Activated CD4-positive, alpha-beta memory T cell treated with anti-CD3 and anti-CD28 coated beads, Interleukin-2, amount 10 ng/mL, durations not matched to agents 7 days and 5 days (primary cell): ENCODE measurements at regions of chr19 and their contacts with region 1.

Region 1: DNA sequence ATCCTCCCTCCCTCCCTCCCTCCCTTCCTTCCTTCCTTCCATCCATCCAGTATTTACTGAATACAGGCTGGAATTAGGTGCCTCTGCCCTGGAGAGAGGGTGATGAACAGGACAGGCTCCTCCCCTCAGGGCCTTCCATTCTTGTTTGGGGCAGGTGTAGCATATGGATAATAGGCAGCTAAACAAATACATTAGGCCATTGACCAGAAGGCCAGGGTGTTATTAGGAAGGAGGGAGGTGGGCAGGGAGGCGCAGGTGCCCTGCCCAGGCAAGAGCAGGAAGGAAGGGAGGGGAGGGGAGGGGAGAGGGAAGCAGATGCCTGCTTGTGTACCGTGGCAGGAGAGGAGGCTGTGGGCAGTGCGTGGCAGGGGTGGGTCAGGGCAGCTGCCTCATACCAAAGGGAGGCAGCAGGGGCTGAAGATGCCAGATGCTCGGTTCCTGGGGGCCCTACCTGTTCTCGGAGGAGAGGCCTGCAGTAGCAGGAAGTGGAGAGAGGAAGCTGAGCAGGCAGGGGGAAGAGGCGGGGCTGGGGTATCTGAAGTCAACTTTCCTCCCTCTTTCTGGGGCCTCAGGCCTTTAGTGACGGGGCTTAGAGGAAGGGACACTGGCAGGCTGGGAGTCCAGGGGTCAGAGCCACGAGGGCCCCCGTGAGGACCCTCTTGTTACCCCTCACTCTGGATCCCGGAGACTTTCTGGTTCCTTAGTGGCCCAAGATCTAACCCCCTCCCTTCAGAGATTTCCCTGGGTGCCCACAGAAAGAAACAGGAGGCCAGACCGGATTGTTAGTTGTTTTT is at the start of gene RINL:
- DNase-seq: peak; percentile 78
- H3K4me3 Mint-ChIP-seq: peak within 1 kb of the TSS; percentile 87
- H3K27ac Mint-ChIP-seq: peak within 1 kb of the TSS; percentile 98
- H3K4me1 Mint-ChIP-seq: peaks cover 43% of the 10 kb centered on the region
- H3K27me3 Mint-ChIP-seq: no peaks in the 10 kb centered on the region
- total RNA-seq, gene RINL: 79.9 to 82.2 TPM

Region 2: DNA sequence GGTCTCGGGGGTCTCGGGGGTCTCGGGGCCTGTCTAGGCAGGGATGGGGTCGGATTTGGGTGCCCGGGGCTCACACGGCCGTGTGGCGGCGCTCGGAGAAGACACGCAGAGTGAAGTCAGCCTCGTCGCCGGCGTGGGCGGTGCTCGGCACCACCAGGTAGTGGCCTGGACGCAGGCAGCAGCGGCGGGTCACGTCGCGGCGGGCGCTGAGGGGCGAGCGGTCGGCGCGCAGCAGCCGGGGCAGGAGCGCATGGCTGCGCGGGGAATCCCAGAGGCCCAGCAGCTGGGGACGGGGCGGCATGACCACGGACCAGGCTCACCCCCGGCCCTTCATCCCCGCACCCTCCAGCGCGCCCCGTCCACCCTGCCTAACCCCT is 142.0 kb before region 1 on chr19:
- CTCF ChIA-PET with region 1: no interaction called
- POLR2A ChIA-PET with region 1: interaction called, 15 read pairs
- DNase-seq: peak; percentile 65
- H3K4me3 Mint-ChIP-seq: peak overlapping the region; percentile 63
- H3K27ac Mint-ChIP-seq: no peak overlapping the region
- H3K4me1 Mint-ChIP-seq: peaks cover 62% of the 10 kb centered on the region
- H3K27me3 Mint-ChIP-seq: peaks cover 4% of the 10 kb centered on the region

Region 3: DNA sequence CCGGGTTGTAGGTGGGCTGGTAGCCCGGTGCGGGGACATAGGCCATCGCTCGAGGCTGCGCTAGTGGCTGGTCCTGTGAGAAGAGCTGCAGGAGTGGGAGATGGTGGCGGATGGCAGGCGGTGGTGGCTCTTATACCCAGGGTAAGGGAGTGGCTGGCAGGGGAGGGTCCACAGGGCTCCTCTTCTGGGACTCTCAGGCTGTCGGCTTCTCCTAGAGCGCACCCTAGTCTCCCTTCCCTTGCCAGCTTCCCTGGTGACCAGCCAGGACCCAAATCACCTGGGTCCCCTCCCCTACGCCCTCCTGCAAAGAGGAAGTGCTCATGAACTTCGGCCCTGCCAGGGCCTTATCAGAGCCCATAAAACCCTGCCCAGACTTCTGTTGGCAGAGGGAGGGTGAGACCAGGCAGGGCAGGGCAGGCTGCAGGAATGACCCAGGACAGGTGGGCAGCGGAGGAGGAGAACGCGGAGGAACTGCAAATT is 65.1 kb before region 1 on chr19 and contains the start of gene LGALS4:
- CTCF ChIA-PET with region 1: no interaction called
- POLR2A ChIA-PET with region 1: no interaction called
- DNase-seq: no peak
- H3K4me3 Mint-ChIP-seq: no peak within 1 kb of the TSS
- H3K27ac Mint-ChIP-seq: no peak within 1 kb of the TSS
- H3K4me1 Mint-ChIP-seq: no peaks in the 10 kb centered on the region
- H3K27me3 Mint-ChIP-seq: no peaks in the 10 kb centered on the region
- total RNA-seq, gene LGALS4: 0.81 to 0.93 TPM

Region 4: DNA sequence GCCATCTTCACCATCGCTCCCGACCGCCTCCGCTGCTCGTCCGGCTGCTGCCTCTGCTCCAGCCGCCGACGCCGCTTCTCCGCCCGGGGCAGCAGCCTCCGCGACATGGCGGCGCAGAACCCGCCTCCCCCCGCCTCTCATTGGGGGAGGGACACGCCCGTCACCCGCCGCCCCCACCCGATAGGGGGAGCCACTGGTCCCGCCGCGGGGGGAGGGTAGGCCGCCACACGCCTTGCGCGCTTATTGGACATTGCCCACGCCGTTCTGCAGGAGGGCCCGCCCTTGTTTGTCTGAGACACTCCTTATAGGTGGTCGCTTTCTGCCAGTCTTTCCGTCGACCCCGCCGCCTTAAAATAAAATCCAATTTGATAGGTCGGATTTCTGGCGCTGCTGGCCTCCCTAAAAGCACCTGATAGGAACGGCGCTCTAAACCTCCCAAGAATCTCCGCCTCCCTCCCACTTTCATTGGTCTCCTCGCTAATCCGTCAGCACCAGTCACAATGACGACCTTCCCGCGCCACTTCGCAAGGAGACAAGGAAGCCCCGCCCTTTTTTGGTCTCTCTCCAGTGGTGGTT is 28.0 kb before region 1 on chr19 and contains the start of gene HNRNPL:
- CTCF ChIA-PET with region 1: interaction called, 6 read pairs
- POLR2A ChIA-PET with region 1: interaction called, 46 read pairs
- DNase-seq: peak; percentile 99
- H3K4me3 Mint-ChIP-seq: peak within 1 kb of the TSS; percentile 92
- H3K27ac Mint-ChIP-seq: peak within 1 kb of the TSS; percentile 99
- H3K4me1 Mint-ChIP-seq: peaks cover 58% of the 10 kb centered on the region
- H3K27me3 Mint-ChIP-seq: no peaks in the 10 kb centered on the region
- total RNA-seq, gene HNRNPL: 457 to 464 TPM

Region 5: DNA sequence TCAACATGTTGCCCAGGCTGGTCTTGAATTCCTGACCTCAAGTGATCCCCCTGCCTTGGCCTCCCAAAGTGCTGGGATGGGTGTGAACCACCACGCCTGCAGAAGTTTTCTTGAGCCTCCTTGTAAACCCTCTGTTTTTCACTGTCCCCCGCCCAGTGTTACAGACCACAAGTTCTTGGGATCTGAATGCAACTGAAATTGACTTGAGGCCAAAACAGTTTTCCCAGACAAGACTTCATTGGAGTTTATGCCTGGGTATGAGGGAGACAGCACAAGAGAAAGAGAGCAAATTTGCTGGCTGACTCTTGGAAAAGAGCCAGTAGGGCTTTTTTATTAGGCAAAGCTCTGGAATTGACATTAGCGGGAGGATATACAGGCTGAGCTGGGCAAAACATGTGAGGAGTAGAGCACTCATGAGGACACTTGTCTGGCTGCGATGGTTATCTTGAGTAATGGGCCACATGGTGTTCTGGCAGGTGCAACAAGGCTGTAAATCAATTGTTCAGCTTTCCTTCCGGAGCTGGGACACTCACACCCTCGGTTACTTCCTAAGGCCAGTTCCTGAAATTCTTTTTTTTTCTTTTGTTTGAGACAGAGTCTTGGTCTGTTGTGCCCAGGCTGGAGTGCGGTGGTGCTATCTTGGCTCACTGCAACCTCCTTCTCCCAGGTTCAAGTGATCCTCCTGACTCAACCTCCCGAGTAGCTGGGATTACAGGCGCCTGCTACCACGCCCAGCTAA is 15.5 kb before region 1 on chr19:
- CTCF ChIA-PET with region 1: interaction called, 6 read pairs
- POLR2A ChIA-PET with region 1: interaction called, 38 read pairs
- DNase-seq: no peak
- H3K4me3 Mint-ChIP-seq: no peak overlapping the region
- H3K27ac Mint-ChIP-seq: no peak overlapping the region
- H3K4me1 Mint-ChIP-seq: peaks cover 52% of the 10 kb centered on the region
- H3K27me3 Mint-ChIP-seq: no peaks in the 10 kb centered on the region

Region 6: GRCh38 chr19:38899447-38900219 is 21.7 kb after region 1 on chr19 and contains the starts of genes NFKBIB and SIRT2:
- CTCF ChIA-PET with region 1: no interaction called
- POLR2A ChIA-PET with region 1: interaction called, 15 read pairs
- DNase-seq: peak; percentile 100
- H3K4me3 Mint-ChIP-seq: peak within 1 kb of the TSS; percentile 98
- H3K27ac Mint-ChIP-seq: peak within 1 kb of the TSS; percentile 89
- H3K4me1 Mint-ChIP-seq: peaks cover 48% of the 10 kb centered on the region
- H3K27me3 Mint-ChIP-seq: no peaks in the 10 kb centered on the region
- total RNA-seq, gene NFKBIB: 40.2 to 40.8 TPM
- total RNA-seq, gene SIRT2: 51.4 to 53.2 TPM

Region 7: GRCh38 chr19:39078436-39079200 is 200.6 kb after region 1 on chr19:
- CTCF ChIA-PET with region 1: no interaction called
- POLR2A ChIA-PET with region 1: no interaction called
- DNase-seq: no peak
- H3K4me3 Mint-ChIP-seq: no peak overlapping the region
- H3K27ac Mint-ChIP-seq: no peak overlapping the region
- H3K4me1 Mint-ChIP-seq: peaks cover 22% of the 10 kb centered on the region
- H3K27me3 Mint-ChIP-seq: peaks cover 35% of the 10 kb centered on the region